ENCODE measurements at regions of chr12 and their contacts with region 1.

Region 1: DNA sequence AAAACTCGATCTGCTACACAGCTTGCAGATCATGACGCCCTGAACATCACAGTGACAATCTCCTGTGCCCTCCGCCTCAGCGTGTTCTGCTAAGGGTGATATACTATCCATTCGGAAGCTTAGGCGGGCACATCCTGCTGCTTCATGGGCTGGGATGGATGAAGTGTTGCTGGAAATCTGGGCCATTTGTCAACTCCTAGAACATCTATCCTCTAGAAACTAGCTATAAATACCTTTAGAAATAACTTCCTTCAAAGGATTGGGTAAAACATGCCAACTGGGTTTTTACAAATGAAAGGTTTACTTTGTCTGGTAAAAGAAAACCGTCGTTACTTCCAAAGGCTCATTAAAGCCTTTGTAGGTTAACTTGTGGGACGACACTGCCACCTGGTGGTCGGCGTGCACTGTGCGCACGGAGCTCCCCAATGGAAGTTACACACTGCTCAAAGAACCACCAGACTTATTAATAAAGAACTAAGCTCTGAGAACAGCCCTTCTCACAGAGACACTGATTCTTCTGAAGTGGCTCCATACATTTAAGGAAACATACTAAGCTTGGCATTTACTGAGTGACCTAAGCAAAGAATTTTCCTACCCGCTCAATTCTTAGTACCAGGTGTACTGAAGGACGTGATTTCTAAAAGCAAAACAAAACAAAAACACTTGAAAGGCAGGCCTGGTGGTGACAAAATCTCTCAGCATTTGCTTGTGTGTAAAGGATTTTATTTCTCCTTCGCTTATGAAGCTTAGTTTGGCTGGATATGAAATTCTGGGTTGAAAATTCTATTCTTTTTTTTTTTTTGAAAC is 21.6 kb upstream of the CACNA2D4 start:
- DNase-seq: peak; percentile 75 to 92 (median 84)
- ATAC-seq: peak; percentile 100
- H3K4me3 ChIP-seq: no peak overlapping the region
- H3K4me3 Mint-ChIP-seq: peak overlapping the region in 1 of 10 donors; percentile 25
- H3K27ac ChIP-seq: no peak overlapping the region
- H3K27ac Mint-ChIP-seq: peak overlapping the region in 5 of 9 donors; percentile 2 to 65 (median 47)
- H3K4me1 ChIP-seq: peaks cover 0 to 3% of the 10 kb centered on the region in 2 donors
- H3K4me1 Mint-ChIP-seq: peaks cover 0 to 13% (median 4%) of the 10 kb centered on the region in 7 donors
- H3K27me3 ChIP-seq: no peaks in the 10 kb centered on the region
- H3K27me3 Mint-ChIP-seq: no peaks in the 10 kb centered on the region

Region 2: GRCh38 chr12:1634590-1635191 is 305.3 kb before region 1 on chr12:
- CTCF ChIA-PET with region 1: interaction called, 23 read pairs
- POLR2A ChIA-PET with region 1: no interaction called
- intact Hi-C with region 1: loop called (anchors 1 to 5 kb)
- DNase-seq: peak; percentile 21 to 59 (median 44)
- ATAC-seq: peak; percentile 71
- H3K4me3 ChIP-seq: no peak overlapping the region
- H3K4me3 Mint-ChIP-seq: no peak overlapping the region
- H3K27ac ChIP-seq: no peak overlapping the region
- H3K27ac Mint-ChIP-seq: no peak overlapping the region
- H3K4me1 ChIP-seq: peaks cover 0 to 8% of the 10 kb centered on the region in 2 donors
- H3K4me1 Mint-ChIP-seq: peaks cover 0 to 17% (median 13%) of the 10 kb centered on the region in 7 donors
- H3K27me3 ChIP-seq: peaks cover 0 to 4% of the 10 kb centered on the region in 2 donors
- H3K27me3 Mint-ChIP-seq: peaks cover 28 to 61% (median 33%) of the 10 kb centered on the region in 5 donors

Region 3: DNA sequence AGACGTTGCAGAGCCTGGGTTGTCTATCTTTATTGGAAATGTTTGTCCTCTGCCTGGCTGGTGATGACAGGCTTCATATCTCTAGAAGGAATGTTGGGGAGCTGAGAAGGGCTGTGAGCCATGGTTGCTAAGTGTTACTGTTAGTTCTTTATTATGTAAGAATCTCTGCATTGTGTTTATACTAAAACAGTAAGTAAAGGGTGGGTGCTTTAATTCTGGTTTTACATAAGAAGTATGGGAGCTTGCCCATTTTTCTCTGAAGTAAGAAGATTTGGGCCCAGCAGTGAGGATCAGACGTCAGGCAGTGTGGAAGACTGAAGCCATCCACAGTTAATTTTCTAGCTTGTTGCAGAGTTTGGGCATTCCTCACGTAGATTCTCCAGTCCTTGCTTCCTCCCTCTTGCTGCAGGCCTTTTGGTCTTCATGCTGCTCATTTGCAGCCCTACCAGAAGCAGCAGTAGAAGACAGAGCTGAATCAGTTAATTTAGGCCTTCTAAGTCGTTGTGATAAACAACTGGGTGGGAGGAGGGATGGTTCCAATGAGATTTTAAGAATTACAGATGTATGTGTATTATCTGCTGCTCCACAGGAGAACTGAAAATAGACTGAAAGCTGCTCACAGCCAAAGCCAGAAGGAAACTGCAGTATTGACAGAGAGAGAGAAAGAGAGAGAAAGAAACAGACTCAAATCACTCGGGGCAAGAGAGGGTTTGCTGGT is 289.6 kb before region 1 on chr12:
- CTCF ChIA-PET with region 1: interaction called, 49 read pairs
- POLR2A ChIA-PET with region 1: no interaction called
- intact Hi-C with region 1: loop called (anchors 1 kb)
- DNase-seq: no peak
- ATAC-seq: no peak
- H3K4me3 ChIP-seq: no peak overlapping the region
- H3K4me3 Mint-ChIP-seq: no peak overlapping the region
- H3K27ac ChIP-seq: no peak overlapping the region
- H3K27ac Mint-ChIP-seq: peak overlapping the region in 1 of 9 donors; percentile 46
- H3K4me1 ChIP-seq: no peaks in the 10 kb centered on the region
- H3K4me1 Mint-ChIP-seq: peaks cover 0 to 6% (median 4%) of the 10 kb centered on the region in 7 donors
- H3K27me3 ChIP-seq: no peaks in the 10 kb centered on the region
- H3K27me3 Mint-ChIP-seq: peaks cover 4 to 44% (median 9%) of the 10 kb centered on the region in 5 donors

Region 4: GRCh38 chr12:1915082-1915968 is 24.7 kb before region 1 on chr12:
- CTCF ChIA-PET with region 1: interaction called, 8 read pairs
- POLR2A ChIA-PET with region 1: interaction called, 7 read pairs
- intact Hi-C with region 1: loop called in 1 of 2 experiments (anchors 1 kb)
- DNase-seq: peak in 8 of 9 donors; percentile 29 to 67 (median 58)
- ATAC-seq: peak; percentile 85
- H3K4me3 ChIP-seq: peak overlapping the region; percentile 23
- H3K4me3 Mint-ChIP-seq: peak overlapping the region; percentile 32 to 82 (median 62)
- H3K27ac ChIP-seq: no peak overlapping the region
- H3K27ac Mint-ChIP-seq: peak overlapping the region; percentile 57 to 90 (median 82)
- H3K4me1 ChIP-seq: peaks cover 11 to 23% of the 10 kb centered on the region in 2 donors
- H3K4me1 Mint-ChIP-seq: peaks cover 18 to 41% (median 32%) of the 10 kb centered on the region in 7 donors
- H3K27me3 ChIP-seq: no peaks in the 10 kb centered on the region
- H3K27me3 Mint-ChIP-seq: peaks cover under 1 to 20% (median 9%) of the 10 kb centered on the region in 5 donors

Region 5: GRCh38 chr12:2034633-2035430 is 94.8 kb after region 1 on chr12:
- CTCF ChIA-PET with region 1: no interaction called
- POLR2A ChIA-PET with region 1: no interaction called
- intact Hi-C with region 1: loop called (anchors 2 kb)
- DNase-seq: peak; percentile 70 to 94 (median 83)
- ATAC-seq: peak; percentile 100
- H3K4me3 ChIP-seq: peak overlapping the region; percentile 64
- H3K4me3 Mint-ChIP-seq: peak overlapping the region; percentile 67 to 81 (median 74)
- H3K27ac ChIP-seq: no peak overlapping the region
- H3K27ac Mint-ChIP-seq: peak overlapping the region in 4 of 9 donors; percentile 6 to 85 (median 47)
- H3K4me1 ChIP-seq: peaks cover 0 to 4% of the 10 kb centered on the region in 2 donors
- H3K4me1 Mint-ChIP-seq: peaks cover 6 to 15% (median 13%) of the 10 kb centered on the region in 7 donors
- H3K27me3 ChIP-seq: peaks cover 0 to 4% of the 10 kb centered on the region in 2 donors
- H3K27me3 Mint-ChIP-seq: peaks cover 33 to 75% (median 36%) of the 10 kb centered on the region in 5 donors

Region 6: DNA sequence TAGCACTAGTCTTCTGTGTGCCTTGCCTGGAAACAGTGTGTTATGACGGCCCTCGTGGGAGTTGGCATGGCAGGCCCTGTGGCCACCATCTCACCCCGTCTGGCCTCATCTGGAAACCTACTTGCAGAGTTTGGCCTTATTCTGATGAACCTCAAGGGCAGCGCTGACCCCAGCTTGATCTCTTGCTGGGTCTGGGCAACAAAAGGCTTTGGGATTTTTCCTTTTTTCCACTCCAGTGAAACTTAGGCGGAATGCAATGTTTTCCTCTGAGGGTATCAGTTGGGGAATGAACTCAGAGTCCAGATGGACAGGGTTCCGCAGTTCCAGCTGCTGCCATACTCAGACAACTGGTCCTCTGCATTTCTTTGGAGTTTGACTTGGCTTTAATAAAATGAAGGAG is 128.6 kb after region 1 on chr12:
- CTCF ChIA-PET with region 1: no interaction called
- POLR2A ChIA-PET with region 1: no interaction called
- intact Hi-C with region 1: no loop called
- DNase-seq: no peak
- ATAC-seq: no peak
- H3K4me3 ChIP-seq: no peak overlapping the region
- H3K4me3 Mint-ChIP-seq: no peak overlapping the region
- H3K27ac ChIP-seq: no peak overlapping the region
- H3K27ac Mint-ChIP-seq: no peak overlapping the region
- H3K4me1 ChIP-seq: peaks cover 5 to 6% of the 10 kb centered on the region in 2 donors
- H3K4me1 Mint-ChIP-seq: peaks cover 10 to 24% (median 12%) of the 10 kb centered on the region in 7 donors
- H3K27me3 ChIP-seq: no peaks in the 10 kb centered on the region
- H3K27me3 Mint-ChIP-seq: peaks cover 8 to 40% (median 18%) of the 10 kb centered on the region in 5 donors